Naive thymus-derived CD4-positive, alpha-beta T cell (primary cell): ENCODE measurements at regions of chr6 and their contacts with region 1.

Region 1: DNA sequence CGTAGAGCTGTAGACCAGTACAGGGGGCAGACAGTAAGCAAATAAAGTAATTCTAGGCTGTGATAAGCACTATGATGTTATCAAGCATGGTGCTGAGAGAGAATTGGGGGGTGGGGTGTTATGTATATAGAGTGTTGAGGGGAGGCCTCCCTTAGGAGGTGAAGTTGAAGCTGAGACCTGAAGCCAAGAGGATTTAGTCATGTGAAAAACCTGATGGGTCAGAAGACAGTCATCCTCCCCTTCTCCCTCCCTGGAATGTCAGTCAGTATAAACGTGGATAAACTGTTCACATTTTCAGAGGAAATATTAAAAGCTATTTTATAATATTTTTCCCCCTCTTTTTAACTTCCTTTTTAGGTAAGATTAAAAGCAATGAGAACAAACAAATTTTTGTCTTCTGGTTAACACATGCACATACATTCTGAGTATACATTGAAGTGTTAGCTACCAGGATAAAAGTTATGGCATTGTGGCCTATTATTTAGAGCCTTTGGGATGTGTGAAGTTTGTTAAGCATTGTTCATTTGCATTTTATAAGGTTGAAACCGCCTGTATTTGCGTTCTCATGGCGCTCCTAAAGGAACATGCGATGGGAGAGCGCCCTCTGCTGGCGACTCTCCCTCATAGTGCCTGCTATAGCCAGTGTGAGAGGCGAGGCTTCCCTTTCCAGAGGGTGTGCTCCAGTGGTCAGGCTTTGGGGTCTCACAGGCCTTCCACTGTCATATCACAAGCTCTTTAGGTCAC is 35.4 kb upstream of the MAPK13 start:
- DNase-seq: peak; percentile 61 to 82 (median 77)
- ATAC-seq: peak; percentile 88
- H3K4me3 ChIP-seq: no peak overlapping the region
- H3K4me3 Mint-ChIP-seq: no peak overlapping the region
- H3K27ac ChIP-seq: peak overlapping the region; percentile 62
- H3K27ac Mint-ChIP-seq: peak overlapping the region in 8 of 9 donors; percentile 46 to 85 (median 78)
- H3K4me1 ChIP-seq: peaks cover 15 to 21% of the 10 kb centered on the region in 2 donors
- H3K4me1 Mint-ChIP-seq: peaks cover 14 to 48% (median 40%) of the 10 kb centered on the region in 7 donors
- H3K27me3 ChIP-seq: no peaks in the 10 kb centered on the region
- H3K27me3 Mint-ChIP-seq: no peaks in the 10 kb centered on the region

Region 2: GRCh38 chr6:35240840-35241801 is 853.8 kb before region 1 on chr6:
- CTCF ChIA-PET with region 1: no interaction called
- POLR2A ChIA-PET with region 1: no interaction called
- intact Hi-C with region 1: no loop called
- DNase-seq: peak; percentile 34 to 78 (median 62)
- ATAC-seq: peak; percentile 89
- H3K4me3 ChIP-seq: no peak overlapping the region
- H3K4me3 Mint-ChIP-seq: no peak overlapping the region
- H3K27ac ChIP-seq: no peak overlapping the region
- H3K27ac Mint-ChIP-seq: peak overlapping the region in 2 of 9 donors; percentile 10 to 65
- H3K4me1 ChIP-seq: no peaks in the 10 kb centered on the region
- H3K4me1 Mint-ChIP-seq: peaks cover 3 to 10% (median 4%) of the 10 kb centered on the region in 7 donors
- H3K27me3 ChIP-seq: no peaks in the 10 kb centered on the region
- H3K27me3 Mint-ChIP-seq: peaks cover 0 to 6% (median 0%) of the 10 kb centered on the region in 5 donors

Region 3: GRCh38 chr6:35893246-35893645 is 201.7 kb before region 1 on chr6:
- CTCF ChIA-PET with region 1: interaction called, 3 read pairs
- POLR2A ChIA-PET with region 1: no interaction called
- intact Hi-C with region 1: loop called in 1 of 2 experiments (anchors 10 kb)
- DNase-seq: no peak
- ATAC-seq: no peak
- H3K4me3 ChIP-seq: no peak overlapping the region
- H3K4me3 Mint-ChIP-seq: no peak overlapping the region
- H3K27ac ChIP-seq: no peak overlapping the region
- H3K27ac Mint-ChIP-seq: peak overlapping the region in 1 of 9 donors; percentile 41
- H3K4me1 ChIP-seq: no peaks in the 10 kb centered on the region
- H3K4me1 Mint-ChIP-seq: peaks cover 11 to 29% (median 22%) of the 10 kb centered on the region in 7 donors
- H3K27me3 ChIP-seq: no peaks in the 10 kb centered on the region
- H3K27me3 Mint-ChIP-seq: no peaks in the 10 kb centered on the region

Region 4: DNA sequence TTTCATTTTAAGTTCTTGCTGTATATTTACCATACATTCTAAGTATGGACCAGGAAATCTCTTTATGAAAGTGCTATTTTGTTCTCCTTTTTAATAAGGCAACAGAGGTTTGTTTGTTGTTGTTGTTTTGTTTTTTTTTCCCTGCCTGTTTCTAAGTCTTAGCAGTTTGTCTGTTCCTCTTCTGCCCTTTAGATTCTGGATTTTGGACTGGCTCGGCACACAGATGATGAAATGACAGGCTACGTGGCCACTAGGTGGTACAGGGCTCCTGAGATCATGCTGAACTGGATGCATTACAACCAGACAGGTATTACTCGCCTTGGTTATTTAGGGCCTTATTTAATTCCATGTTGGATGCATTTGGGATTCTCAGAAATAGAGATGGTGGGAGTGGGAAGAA is 19.3 kb before region 1 on chr6:
- CTCF ChIA-PET with region 1: interaction called, 11 read pairs
- POLR2A ChIA-PET with region 1: no interaction called
- intact Hi-C with region 1: loop called in 1 of 2 experiments (anchors 2 kb)
- DNase-seq: peak in 5 of 9 donors; percentile 8 to 35 (median 22)
- ATAC-seq: peak; percentile 61
- H3K4me3 ChIP-seq: no peak overlapping the region
- H3K4me3 Mint-ChIP-seq: no peak overlapping the region
- H3K27ac ChIP-seq: no peak overlapping the region
- H3K27ac Mint-ChIP-seq: peak overlapping the region in 6 of 9 donors; percentile 6 to 69 (median 47)
- H3K4me1 ChIP-seq: no peaks in the 10 kb centered on the region
- H3K4me1 Mint-ChIP-seq: peaks cover 8 to 40% (median 28%) of the 10 kb centered on the region in 7 donors
- H3K27me3 ChIP-seq: no peaks in the 10 kb centered on the region
- H3K27me3 Mint-ChIP-seq: no peaks in the 10 kb centered on the region

Region 5: GRCh38 chr6:36123257-36124139 is 28.6 kb after region 1 on chr6:
- CTCF ChIA-PET with region 1: interaction called, 53 read pairs
- POLR2A ChIA-PET with region 1: interaction called, 19 read pairs
- intact Hi-C with region 1: loop called in 1 of 2 experiments (anchors 1 kb)
- DNase-seq: peak; percentile 74 to 96 (median 89)
- ATAC-seq: peak; percentile 83
- H3K4me3 ChIP-seq: peak overlapping the region; percentile 11
- H3K4me3 Mint-ChIP-seq: peak overlapping the region; percentile 36 to 99 (median 60)
- H3K27ac ChIP-seq: peak overlapping the region; percentile 90
- H3K27ac Mint-ChIP-seq: peak overlapping the region; percentile 94 to 100 (median 99)
- H3K4me1 ChIP-seq: peaks cover 64 to 75% of the 10 kb centered on the region in 2 donors
- H3K4me1 Mint-ChIP-seq: peaks cover 63 to 98% (median 87%) of the 10 kb centered on the region in 7 donors
- H3K27me3 ChIP-seq: no peaks in the 10 kb centered on the region
- H3K27me3 Mint-ChIP-seq: no peaks in the 10 kb centered on the region

Region 6: DNA sequence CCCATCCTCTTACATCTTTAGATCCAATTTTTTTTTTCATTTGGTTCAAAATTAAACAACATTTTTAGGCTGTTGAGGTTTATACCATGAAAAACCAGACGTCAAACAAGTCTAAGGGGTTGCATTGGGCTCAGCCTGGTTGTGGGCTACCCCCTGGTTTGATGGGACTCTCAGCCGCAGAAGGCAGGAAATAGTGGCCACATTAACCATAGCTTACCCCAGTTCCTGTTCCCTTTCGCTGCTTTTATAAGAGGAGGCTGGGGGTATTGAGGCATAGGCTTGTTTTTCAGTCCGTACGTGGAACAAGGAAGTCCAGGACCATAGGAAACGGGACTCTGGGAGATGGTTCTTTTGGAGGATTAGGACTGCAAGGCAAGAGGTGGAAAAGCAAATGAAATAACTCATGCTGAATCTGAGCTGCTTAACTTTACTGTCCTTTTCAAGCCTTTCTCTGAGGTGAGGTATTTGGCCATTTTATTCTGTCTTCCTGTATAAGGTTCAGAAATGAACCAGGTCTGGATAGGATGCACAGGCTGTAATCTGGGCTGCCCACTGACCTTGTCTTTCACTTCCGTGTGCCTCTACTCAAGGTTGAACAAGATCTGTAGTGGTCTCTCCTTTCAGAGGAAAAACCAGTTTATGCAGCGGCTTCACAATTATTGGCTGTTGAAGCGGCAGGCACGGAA is 109.3 kb after region 1 on chr6:
- CTCF ChIA-PET with region 1: interaction called, 10 read pairs
- POLR2A ChIA-PET with region 1: no interaction called
- intact Hi-C with region 1: no loop called
- DNase-seq: peak in 8 of 9 donors; percentile 38 to 81 (median 74)
- ATAC-seq: peak; percentile 97
- H3K4me3 ChIP-seq: peak overlapping the region; percentile 22
- H3K4me3 Mint-ChIP-seq: peak overlapping the region; percentile 48 to 80 (median 74)
- H3K27ac ChIP-seq: no peak overlapping the region
- H3K27ac Mint-ChIP-seq: peak overlapping the region in 8 of 9 donors; percentile 44 to 84 (median 64)
- H3K4me1 ChIP-seq: peaks cover 41 to 52% of the 10 kb centered on the region in 2 donors
- H3K4me1 Mint-ChIP-seq: peaks cover 55 to 76% (median 72%) of the 10 kb centered on the region in 7 donors
- H3K27me3 ChIP-seq: no peaks in the 10 kb centered on the region
- H3K27me3 Mint-ChIP-seq: peaks cover 0 to 3% (median 0%) of the 10 kb centered on the region in 5 donors

Region 7: DNA sequence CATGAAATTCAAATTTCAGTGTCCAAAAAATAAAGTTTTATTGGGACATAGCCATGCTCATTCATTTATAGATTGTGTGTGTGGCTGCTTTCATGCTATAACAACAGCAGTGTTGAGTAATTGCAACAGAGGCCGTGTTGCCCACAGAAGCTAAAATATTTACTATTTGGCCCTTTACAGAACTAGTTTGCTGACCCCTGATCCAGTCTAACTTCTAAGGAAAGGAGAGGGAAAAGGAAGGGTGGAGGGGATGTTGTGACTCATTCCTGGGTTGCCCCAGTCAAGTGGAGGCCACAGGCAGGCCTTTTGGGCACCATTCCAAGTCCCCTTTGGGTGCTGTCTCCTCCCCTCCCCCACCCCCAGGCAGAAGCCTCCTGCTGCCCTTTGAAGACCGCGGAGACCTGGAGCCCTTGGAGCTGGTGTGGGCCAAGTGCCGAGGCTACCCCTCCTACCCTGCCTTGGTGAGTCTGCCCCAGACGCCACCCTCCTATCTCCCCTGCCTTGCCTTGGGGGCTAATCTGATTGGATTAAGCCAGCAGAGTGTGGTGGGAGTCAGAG is 130.1 kb after region 1 on chr6:
- CTCF ChIA-PET with region 1: no interaction called
- POLR2A ChIA-PET with region 1: no interaction called
- intact Hi-C with region 1: no loop called
- DNase-seq: no peak
- ATAC-seq: no peak
- H3K4me3 ChIP-seq: no peak overlapping the region
- H3K4me3 Mint-ChIP-seq: no peak overlapping the region
- H3K27ac ChIP-seq: no peak overlapping the region
- H3K27ac Mint-ChIP-seq: no peak overlapping the region
- H3K4me1 ChIP-seq: no peaks in the 10 kb centered on the region
- H3K4me1 Mint-ChIP-seq: peaks cover 0 to 4% (median 0%) of the 10 kb centered on the region in 7 donors
- H3K27me3 ChIP-seq: no peaks in the 10 kb centered on the region
- H3K27me3 Mint-ChIP-seq: no peaks in the 10 kb centered on the region